ENCODE measurements at regions of chr15 and their contacts with region 1.

Region 1: GRCh38 chr15:26028086-26028740 is 165.1 kb upstream of the ATP10A start:
- DNase-seq: no peak
- H3K4me3 ChIP-seq: no peak overlapping the region
- H3K27ac ChIP-seq: no peak overlapping the region
- H3K4me1 ChIP-seq: no peaks in the 10 kb centered on the region
- H3K27me3 ChIP-seq: no peaks in the 10 kb centered on the region
- CTCF ChIP-seq: no peak

Region 2: DNA sequence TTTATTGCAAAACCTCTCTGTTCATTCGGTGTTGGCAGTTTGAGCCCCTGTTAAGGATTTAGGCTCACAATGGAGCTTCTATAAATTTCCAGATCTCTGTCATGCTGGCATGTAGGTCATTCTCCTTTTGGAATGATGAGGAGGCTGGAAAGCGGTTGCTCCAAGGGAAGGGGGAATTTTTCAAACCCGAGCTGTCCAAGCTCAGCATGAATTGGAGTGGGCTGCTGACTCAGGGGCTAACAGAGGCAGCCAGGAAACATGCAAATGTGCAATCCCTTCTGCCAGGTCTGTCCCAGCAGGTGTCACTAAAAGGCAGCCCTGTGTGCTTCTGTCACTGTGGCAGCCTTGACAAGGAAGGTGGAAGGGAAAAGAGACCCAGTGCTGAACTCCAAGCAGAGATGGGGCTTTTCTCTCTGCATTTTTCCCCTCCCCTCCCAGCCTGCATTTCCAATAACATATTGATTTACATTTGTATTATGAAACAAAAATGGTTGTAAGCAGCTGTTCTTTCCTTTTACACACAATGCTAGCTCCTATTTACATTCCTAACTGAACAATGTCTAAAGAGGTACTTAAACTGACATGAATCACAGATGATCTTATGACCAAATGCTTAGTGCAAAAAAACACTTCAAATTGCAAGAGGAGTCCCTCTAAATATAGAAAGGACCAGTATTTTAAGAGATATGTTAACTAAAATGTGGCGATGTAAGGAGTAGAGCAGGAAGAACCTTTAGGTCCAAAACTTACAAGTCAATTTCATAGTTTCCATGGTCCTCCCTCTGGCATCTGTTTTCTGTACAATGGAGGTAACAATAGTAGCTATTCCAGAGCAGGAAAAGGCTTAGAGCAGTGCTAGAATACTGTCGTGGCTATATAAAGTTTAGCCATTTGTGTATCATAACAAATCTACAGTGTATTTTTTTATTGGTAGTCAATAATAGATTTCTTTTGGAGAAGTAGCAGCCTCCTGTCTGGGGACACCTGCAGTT is 80.6 kb before region 1 on chr15:
- intact Hi-C with region 1: loop called (anchors 10 kb)
- DNase-seq: no peak
- H3K4me3 ChIP-seq: no peak overlapping the region
- H3K27ac ChIP-seq: no peak overlapping the region
- H3K4me1 ChIP-seq: no peaks in the 10 kb centered on the region
- H3K27me3 ChIP-seq: no peaks in the 10 kb centered on the region
- CTCF ChIP-seq: no peak

Region 3: GRCh38 chr15:26126070-26126469 is 97.9 kb after region 1 on chr15:
- intact Hi-C with region 1: no loop called
- DNase-seq: no peak
- H3K4me3 ChIP-seq: no peak overlapping the region
- H3K27ac ChIP-seq: no peak overlapping the region
- H3K4me1 ChIP-seq: no peaks in the 10 kb centered on the region
- H3K27me3 ChIP-seq: no peaks in the 10 kb centered on the region
- CTCF ChIP-seq: no peak

Measured in colonic mucosa (tissue), 4 donors.